Motor neuron (in vitro differentiated cells): ENCODE measurements at regions of chr6 and their contacts with region 1.

Region 1: DNA sequence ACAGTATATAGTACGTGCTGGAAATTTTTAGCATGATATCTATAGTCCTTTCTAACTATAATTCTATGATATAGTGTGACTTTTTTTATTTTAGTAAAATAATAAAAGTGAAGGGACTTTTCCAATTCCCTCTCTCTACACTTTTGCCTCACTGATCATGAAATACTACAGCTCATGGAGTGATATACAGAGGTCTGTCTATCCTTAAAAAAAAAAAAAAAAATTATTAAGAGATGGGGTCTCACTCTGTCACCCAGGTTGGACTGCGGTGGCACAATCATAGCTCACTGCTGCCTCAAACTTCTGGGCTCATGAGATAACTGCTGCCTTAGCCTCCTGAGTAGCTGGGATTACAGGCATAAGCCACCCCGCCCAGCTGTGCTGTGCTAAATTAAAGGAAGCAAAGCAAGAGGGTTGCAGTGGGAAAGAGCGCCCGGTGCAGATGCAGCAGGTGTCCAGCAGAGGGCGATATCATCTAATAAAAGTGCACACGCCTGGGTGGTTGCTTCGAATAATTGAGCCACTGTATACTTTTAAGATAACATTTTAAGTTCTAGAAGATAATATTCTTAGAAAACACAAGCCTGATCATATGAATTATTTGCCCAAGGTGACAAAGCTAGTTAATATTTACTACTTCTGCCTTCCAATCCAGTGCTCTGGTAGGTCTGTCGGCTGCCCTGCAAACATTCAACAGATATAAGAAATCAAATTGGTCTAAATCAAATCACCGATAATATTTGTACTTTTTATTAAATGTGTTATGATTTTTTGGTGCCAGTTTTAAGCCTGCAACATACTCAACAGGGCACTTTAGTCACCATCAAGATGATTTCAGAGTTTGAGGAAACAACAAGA is 94.9 kb upstream of the NT5E start:
- ATAC-seq: peak; percentile 64 to 99 (median 83)
- H3K4me3 ChIP-seq: no peak overlapping the region
- H3K27ac ChIP-seq: no peak overlapping the region
- H3K4me1 ChIP-seq: no peaks in the 10 kb centered on the region

Region 2: GRCh38 chr6:85273046-85273445 is 81.9 kb before region 1 on chr6:
- in situ Hi-C with region 1: no loop called
- ATAC-seq: peak in 3 of 8 experiments; percentile 67 to 82 (median 69)
- H3K4me3 ChIP-seq: no peak overlapping the region
- H3K27ac ChIP-seq: no peak overlapping the region
- H3K4me1 ChIP-seq: no peaks in the 10 kb centered on the region

Region 3: GRCh38 chr6:85482905-85483700 is 128.1 kb after region 1 on chr6:
- in situ Hi-C with region 1: loop called in 4 of 9 experiments (anchors 10 to 25 kb)
- ATAC-seq: peak in 7 of 8 experiments; percentile 47 to 97 (median 79)
- H3K4me3 ChIP-seq: no peak overlapping the region
- H3K27ac ChIP-seq: no peak overlapping the region
- H3K4me1 ChIP-seq: no peaks in the 10 kb centered on the region

Region 4: GRCh38 chr6:85498596-85499258 is 143.7 kb after region 1 on chr6:
- in situ Hi-C with region 1: loop called in 3 of 9 experiments (anchors 10 to 25 kb)
- ATAC-seq: no peak
- H3K4me3 ChIP-seq: no peak overlapping the region
- H3K27ac ChIP-seq: no peak overlapping the region
- H3K4me1 ChIP-seq: no peaks in the 10 kb centered on the region